ENCODE measurements at regions of chr1 and their contacts with region 1.

Region 1: GRCh38 chr1:96559707-96560596 is 161.6 kb upstream of the PTBP2 start:
- DNase-seq: peak; percentile 25 to 75
- H3K4me3 ChIP-seq: no peak overlapping the region
- H3K27ac ChIP-seq: peak overlapping the region; percentile 68
- H3K4me1 ChIP-seq: peaks cover 12% of the 10 kb centered on the region; the same call in 1 of the 2 replicates
- H3K27me3 ChIP-seq: no peaks in the 10 kb centered on the region
- CTCF ChIP-seq: no peak

Region 2: GRCh38 chr1:95650631-95651030 is 909.3 kb before region 1 on chr1:
- CTCF ChIA-PET with region 1: no interaction called
- POLR2A ChIA-PET with region 1: no interaction called
- intact Hi-C with region 1: loop called (anchors 10 kb)
- DNase-seq: no peak
- H3K4me3 ChIP-seq: no peak overlapping the region
- H3K27ac ChIP-seq: no peak overlapping the region
- H3K4me1 ChIP-seq: no peaks in the 10 kb centered on the region
- H3K27me3 ChIP-seq: peaks cover 17% of the 10 kb centered on the region; the same call in 1 of the 2 replicates
- CTCF ChIP-seq: no peak